ENCODE measurements at regions of chr22 and their contacts with region 1.

Region 1: GRCh38 chr22:30356449-30357235 is at the starts of genes CCDC157 and SF3A1:
- DNase-seq: peak; percentile 80 to 84
- H3K4me3 ChIP-seq: peak within 1 kb of the TSS; percentile 90
- H3K27ac ChIP-seq: peak within 1 kb of the TSS; percentile 74
- H3K4me1 ChIP-seq: peaks cover 18% of the 10 kb centered on the region
- H3K27me3 ChIP-seq: no peaks in the 10 kb centered on the region
- CTCF ChIP-seq: no peak; the same call in 1 of the 2 replicates
- total RNA-seq, gene CCDC157: 6.2 and 6.8 TPM in 2 replicates
- total RNA-seq, gene SF3A1: 189 and 207 TPM in 2 replicates

Region 2: GRCh38 chr22:30301995-30302809 is 54.4 kb before region 1 on chr22:
- CTCF ChIA-PET with region 1: no interaction called
- POLR2A ChIA-PET with region 1: no interaction called
- intact Hi-C with region 1: loop called (anchors 2 kb)
- DNase-seq: peak; percentile 82 to 95
- H3K4me3 ChIP-seq: no peak overlapping the region; the same call in 1 of the 2 replicates
- H3K27ac ChIP-seq: peak overlapping the region; percentile 95
- H3K4me1 ChIP-seq: peaks cover 97% of the 10 kb centered on the region
- H3K27me3 ChIP-seq: no peaks in the 10 kb centered on the region
- CTCF ChIP-seq: no peak

Region 3: GRCh38 chr22:30390974-30391691 is 34.5 kb after region 1 on chr22:
- CTCF ChIA-PET with region 1: no interaction called
- POLR2A ChIA-PET with region 1: no interaction called
- intact Hi-C with region 1: no loop called
- DNase-seq: peak; percentile 69 to 74
- H3K4me3 ChIP-seq: no peak overlapping the region
- H3K27ac ChIP-seq: no peak overlapping the region
- H3K4me1 ChIP-seq: peaks cover 21% of the 10 kb centered on the region
- H3K27me3 ChIP-seq: no peaks in the 10 kb centered on the region
- CTCF ChIP-seq: peak; percentile 93

Measured in PC-9 (cell line).